CD4-positive, alpha-beta memory T cell (primary cell): ENCODE measurements at regions of chr3 and their contacts with region 1.

Region 1: GRCh38 chr3:129567176-129567705 is 24.3 kb downstream of the H1-8 start:
- DNase-seq: no peak
- H3K4me3 ChIP-seq: no peak overlapping the region
- H3K4me3 Mint-ChIP-seq: no peak overlapping the region
- H3K27ac ChIP-seq: no peak overlapping the region
- H3K27ac Mint-ChIP-seq: peak overlapping the region in 1 of 7 donors; percentile 26
- H3K4me1 ChIP-seq: no peaks in the 10 kb centered on the region
- H3K4me1 Mint-ChIP-seq: peaks cover 0 to 14% (median 4%) of the 10 kb centered on the region in 4 donors
- H3K27me3 ChIP-seq: no peaks in the 10 kb centered on the region
- H3K27me3 Mint-ChIP-seq: no peaks in the 10 kb centered on the region

Region 2: DNA sequence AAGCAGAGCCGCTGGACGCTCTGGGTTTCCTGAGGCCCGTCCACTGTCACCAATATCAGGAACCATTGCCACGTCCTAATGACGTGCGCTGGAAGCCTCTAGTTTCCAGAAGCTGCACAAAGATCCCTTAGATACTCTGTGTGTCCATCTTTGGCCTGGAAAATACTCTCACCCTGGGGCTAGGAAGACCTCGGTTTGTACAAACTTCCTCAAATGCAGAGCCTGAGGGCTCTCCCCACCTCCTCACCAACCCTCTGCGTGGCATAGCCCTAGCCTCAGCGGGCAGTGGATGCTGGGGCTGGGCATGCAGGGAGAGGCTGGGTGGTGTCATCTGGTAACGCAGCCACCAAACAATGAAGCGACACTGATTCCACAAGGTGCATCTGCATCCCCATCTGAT is 35.5 kb before region 1 on chr3:
- CTCF ChIA-PET with region 1: no interaction called
- POLR2A ChIA-PET with region 1: no interaction called
- intact Hi-C with region 1: loop called (anchors 1 kb)
- DNase-seq: no peak
- H3K4me3 ChIP-seq: no peak overlapping the region
- H3K4me3 Mint-ChIP-seq: no peak overlapping the region
- H3K27ac ChIP-seq: no peak overlapping the region
- H3K27ac Mint-ChIP-seq: peak overlapping the region in 2 of 7 donors; percentile 16 to 78
- H3K4me1 ChIP-seq: no peaks in the 10 kb centered on the region
- H3K4me1 Mint-ChIP-seq: peaks cover 0 to 3% (median 0%) of the 10 kb centered on the region in 4 donors
- H3K27me3 ChIP-seq: no peaks in the 10 kb centered on the region
- H3K27me3 Mint-ChIP-seq: no peaks in the 10 kb centered on the region